Heart right ventricle (tissue), 16 donors: ENCODE measurements at regions of chrX and their contacts with region 1.

Region 1: GRCh38 chrX:96692890-96693289 is 8.2 kb downstream of the DIAPH2 start:
- DNase-seq: no peak
- ATAC-seq: no peak
- H3K4me3 ChIP-seq: no peak overlapping the region
- H3K27ac ChIP-seq: no peak overlapping the region
- H3K4me1 ChIP-seq: peaks cover 0 to 38% (median 0%) of the 10 kb centered on the region in 9 donors
- H3K27me3 ChIP-seq: peaks cover 0 to 14% (median 0%) of the 10 kb centered on the region in 7 donors
- CTCF ChIP-seq: no peak

Region 2: GRCh38 chrX:96729868-96730643 is 37.2 kb after region 1 on chrX:
- intact Hi-C with region 1: loop called in 1 of 10 experiments (anchors 1 kb)
- DNase-seq: no peak
- ATAC-seq: no peak
- H3K4me3 ChIP-seq: no peak overlapping the region
- H3K27ac ChIP-seq: no peak overlapping the region
- H3K4me1 ChIP-seq: peaks cover 0 to 18% (median 0%) of the 10 kb centered on the region in 9 donors
- H3K27me3 ChIP-seq: peaks cover 0 to 5% (median 0%) of the 10 kb centered on the region in 7 donors
- CTCF ChIP-seq: no peak